ENCODE measurements at regions of chr14 and their contacts with region 1.

Region 1: GRCh38 chr14:60648934-60649874 is at the start of gene SIX1:
- DNase-seq: peak; percentile 48
- ATAC-seq: peak; percentile 43
- H3K4me3 Mint-ChIP-seq: peak within 1 kb of the TSS; percentile 32
- H3K27ac Mint-ChIP-seq: no peak within 1 kb of the TSS
- H3K4me1 Mint-ChIP-seq: peaks cover 44% of the 10 kb centered on the region
- H3K27me3 Mint-ChIP-seq: peaks cover 84% of the 10 kb centered on the region
- total RNA-seq, gene SIX1: not detected

Region 2: GRCh38 chr14:60508707-60509437 is 140.3 kb before region 1 on chr14 and contains the start of gene SIX6:
- CTCF ChIA-PET with region 1: interaction called, 3 read pairs
- POLR2A ChIA-PET with region 1: no interaction called
- intact Hi-C with region 1: loop called (anchors 2 kb)
- DNase-seq: peak; percentile 48
- ATAC-seq: no peak
- H3K4me3 Mint-ChIP-seq: peak within 1 kb of the TSS; percentile 10
- H3K27ac Mint-ChIP-seq: no peak within 1 kb of the TSS
- H3K4me1 Mint-ChIP-seq: peaks cover 23% of the 10 kb centered on the region
- H3K27me3 Mint-ChIP-seq: peaks cover 71% of the 10 kb centered on the region
- total RNA-seq, gene SIX6: not detected

Region 3: GRCh38 chr14:60514741-60515491 is 134.3 kb before region 1 on chr14:
- CTCF ChIA-PET with region 1: no interaction called
- POLR2A ChIA-PET with region 1: no interaction called
- intact Hi-C with region 1: loop called in 1 of 2 experiments (anchors 2 kb)
- DNase-seq: peak; percentile 50
- ATAC-seq: peak; percentile 53
- H3K4me3 Mint-ChIP-seq: peak overlapping the region; percentile 40
- H3K27ac Mint-ChIP-seq: no peak overlapping the region
- H3K4me1 Mint-ChIP-seq: peaks cover 20% of the 10 kb centered on the region
- H3K27me3 Mint-ChIP-seq: peaks cover 52% of the 10 kb centered on the region

Measured in activated CD4-positive, alpha-beta T cell treated with anti-CD3 and anti-CD28 coated beads for 36 hours (primary cell).